ENCODE measurements at regions of chr1 and their contacts with region 1.

Region 1: GRCh38 chr1:9145021-9145668 is 16.2 kb upstream of the GPR157 start:
- DNase-seq: no peak
- H3K4me3 ChIP-seq: no peak overlapping the region
- CTCF ChIP-seq: no peak

Region 2: DNA sequence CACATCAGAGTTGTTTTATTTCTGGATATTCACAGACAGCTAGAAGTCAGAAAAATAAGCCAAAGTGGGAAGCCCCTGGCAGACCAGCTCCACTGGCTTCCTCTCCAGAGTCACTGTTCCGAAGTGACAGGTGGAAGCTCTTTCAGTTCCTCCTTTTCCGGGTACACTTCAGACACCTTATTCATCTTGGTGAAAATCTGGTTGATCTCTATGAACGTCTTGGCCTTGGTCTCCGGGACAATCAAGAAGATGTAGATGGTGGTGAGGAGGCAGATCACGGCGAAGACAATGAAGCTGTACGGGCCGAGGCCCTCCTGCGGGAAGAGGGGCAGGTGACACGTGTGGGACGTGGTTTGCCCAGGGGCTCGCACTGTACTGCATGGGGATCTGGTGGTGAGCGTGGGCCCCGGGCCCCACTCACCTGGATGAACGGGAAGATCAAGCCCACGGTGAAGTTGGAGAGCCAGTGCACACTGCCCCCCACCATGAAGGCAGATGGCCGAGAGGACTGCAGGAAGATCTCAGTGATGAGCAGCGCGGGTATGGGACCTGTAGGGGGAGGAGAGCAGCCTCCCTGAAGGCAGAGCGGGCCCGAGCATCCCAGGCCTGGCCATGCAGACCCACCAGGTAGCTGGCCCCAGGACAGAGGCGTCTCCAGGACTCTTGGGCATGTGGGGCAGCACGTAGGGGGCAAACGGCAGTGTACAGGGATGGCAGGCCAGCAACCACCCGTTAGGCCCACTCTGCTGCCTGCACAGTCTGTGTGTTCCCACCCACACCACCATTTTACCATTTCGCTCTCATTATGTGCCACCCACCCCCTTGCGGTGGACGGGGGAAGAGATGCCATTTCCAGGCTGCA is 107.4 kb before region 1 on chr1:
- CTCF ChIA-PET with region 1: no interaction called
- POLR2A ChIA-PET with region 1: no interaction called
- DNase-seq: no peak
- H3K4me3 ChIP-seq: no peak overlapping the region
- CTCF ChIP-seq: no peak

Region 3: GRCh38 chr1:9128520-9129265 is 16.5 kb before region 1 on chr1 and contains the start of gene GPR157:
- CTCF ChIA-PET with region 1: interaction called, 27 read pairs
- POLR2A ChIA-PET with region 1: no interaction called
- DNase-seq: no peak
- H3K4me3 ChIP-seq: peak within 1 kb of the TSS; percentile 57
- CTCF ChIP-seq: peak; percentile 21

Region 4: GRCh38 chr1:9160079-9160717 is 15.1 kb after region 1 on chr1:
- CTCF ChIA-PET with region 1: interaction called, 25 read pairs
- POLR2A ChIA-PET with region 1: no interaction called
- DNase-seq: no peak
- H3K4me3 ChIP-seq: no peak overlapping the region
- CTCF ChIP-seq: no peak

Region 5: DNA sequence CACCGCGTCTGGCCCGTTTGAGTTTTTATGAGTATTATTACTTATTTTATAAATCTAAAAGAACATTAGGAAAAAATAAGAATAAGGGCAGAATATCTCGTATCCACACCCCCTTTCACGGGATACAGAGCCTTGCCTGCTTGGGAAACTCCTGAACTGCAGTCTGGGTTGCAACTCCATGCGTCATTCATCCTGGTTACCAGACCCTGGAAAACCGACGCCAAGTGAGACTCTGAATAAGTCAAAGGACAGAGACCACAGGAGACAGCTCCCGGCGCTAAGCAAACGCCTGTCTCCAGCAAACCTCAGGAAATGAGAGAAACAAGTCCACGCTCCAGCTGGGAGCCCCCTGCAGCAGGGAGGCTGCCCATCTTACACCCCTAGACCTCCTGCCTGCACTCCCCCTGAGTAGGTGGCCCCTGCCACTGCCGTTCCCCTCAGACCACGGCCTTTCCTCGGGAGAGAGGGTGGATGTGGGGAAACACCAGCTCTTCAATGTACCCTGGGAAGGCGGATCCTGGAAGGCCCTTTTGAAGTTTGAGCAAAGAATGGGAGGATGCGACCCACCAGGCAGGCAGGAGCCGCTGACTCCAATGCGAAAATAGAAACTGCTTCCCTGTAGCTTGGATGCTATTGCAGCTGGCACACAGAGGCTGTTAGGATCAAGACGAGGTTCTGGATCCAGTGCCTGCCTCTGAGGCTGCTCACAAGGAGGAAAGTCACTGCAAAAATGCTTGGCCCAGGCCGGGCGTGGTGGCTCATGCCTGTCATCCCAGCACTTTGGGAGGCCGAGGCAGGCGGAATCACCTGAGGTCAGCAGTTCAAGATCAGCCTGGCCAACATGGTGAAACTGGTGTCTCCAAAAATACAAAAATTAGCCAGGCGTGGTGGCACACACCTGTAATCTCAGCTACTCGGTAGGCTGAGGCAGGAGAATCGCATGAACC is 21.4 kb after region 1 on chr1:
- CTCF ChIA-PET with region 1: interaction called, 11 read pairs
- POLR2A ChIA-PET with region 1: no interaction called
- DNase-seq: peak; percentile 38
- H3K4me3 ChIP-seq: peak overlapping the region; percentile 18; the same call in 1 of the 2 replicates
- CTCF ChIP-seq: no peak

Region 6: GRCh38 chr1:9196129-9197040 is 51.2 kb after region 1 on chr1:
- CTCF ChIA-PET with region 1: interaction called, 47 read pairs
- POLR2A ChIA-PET with region 1: no interaction called
- DNase-seq: no peak
- H3K4me3 ChIP-seq: peak overlapping the region; percentile 12
- CTCF ChIP-seq: peak; percentile 69

Region 7: GRCh38 chr1:9201401-9202239 is 56.5 kb after region 1 on chr1:
- CTCF ChIA-PET with region 1: interaction called, 47 read pairs
- POLR2A ChIA-PET with region 1: no interaction called
- DNase-seq: no peak
- H3K4me3 ChIP-seq: peak overlapping the region; percentile 66
- CTCF ChIP-seq: no peak

Region 8: DNA sequence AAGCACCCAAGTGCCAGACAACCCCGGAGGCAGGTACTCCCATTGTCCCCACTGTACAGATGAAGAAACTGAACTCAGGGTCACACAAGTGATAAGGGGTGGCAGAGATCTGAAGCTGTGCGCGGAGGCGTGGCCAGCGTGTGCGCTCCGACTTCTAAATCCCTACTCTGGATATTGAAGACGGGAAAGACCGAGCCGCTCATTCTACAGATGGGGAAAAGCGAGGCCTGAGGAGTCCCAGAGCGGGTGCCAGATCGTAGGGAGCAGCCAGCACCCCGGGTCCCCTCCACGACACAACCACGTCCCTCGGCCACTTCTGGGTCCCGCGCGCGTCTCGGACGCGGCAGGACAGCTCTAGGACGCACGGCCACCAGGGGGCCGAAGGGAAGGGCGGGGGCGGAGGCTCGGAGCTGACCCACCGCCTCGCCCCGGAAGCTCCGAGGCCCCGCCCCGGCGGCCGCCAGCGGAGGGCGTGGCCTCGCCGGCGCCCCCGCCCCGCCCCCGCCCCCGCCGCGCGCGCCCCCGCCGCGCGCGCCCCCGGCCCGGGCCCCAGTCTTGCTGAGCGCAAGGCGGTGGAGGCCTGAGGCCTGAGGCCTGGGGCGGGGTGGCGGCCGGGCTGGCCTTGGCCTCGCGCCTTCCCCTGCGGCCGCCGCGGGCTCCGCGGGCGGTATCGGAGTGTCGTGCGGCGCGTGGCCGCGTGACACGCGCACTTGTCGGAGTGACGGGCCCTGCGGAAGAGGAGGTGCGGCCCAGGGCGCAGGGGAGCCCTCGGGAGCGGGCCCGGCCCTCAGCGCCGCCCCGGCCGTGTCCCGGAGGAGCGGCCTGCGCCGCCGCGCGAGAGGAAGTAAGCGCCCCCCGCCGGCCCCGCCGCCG is 89.3 kb after region 1 on chr1 and contains the start of gene H6PD:
- CTCF ChIA-PET with region 1: interaction called, 11 read pairs
- POLR2A ChIA-PET with region 1: no interaction called
- DNase-seq: no peak
- H3K4me3 ChIP-seq: peak within 1 kb of the TSS; percentile 66
- CTCF ChIP-seq: peak; percentile 86